ENCODE measurements at regions of chr11 and their contacts with region 1.

Region 1: GRCh38 chr11:47766305-47767227 is 575 bp downstream of the FNBP4 start:
- DNase-seq: peak; percentile 75
- H3K4me3 Mint-ChIP-seq: peak overlapping the region; percentile 99
- H3K27ac Mint-ChIP-seq: peak overlapping the region; percentile 100
- H3K4me1 Mint-ChIP-seq: peaks cover 28% of the 10 kb centered on the region
- H3K27me3 Mint-ChIP-seq: no peaks in the 10 kb centered on the region

Region 2: DNA sequence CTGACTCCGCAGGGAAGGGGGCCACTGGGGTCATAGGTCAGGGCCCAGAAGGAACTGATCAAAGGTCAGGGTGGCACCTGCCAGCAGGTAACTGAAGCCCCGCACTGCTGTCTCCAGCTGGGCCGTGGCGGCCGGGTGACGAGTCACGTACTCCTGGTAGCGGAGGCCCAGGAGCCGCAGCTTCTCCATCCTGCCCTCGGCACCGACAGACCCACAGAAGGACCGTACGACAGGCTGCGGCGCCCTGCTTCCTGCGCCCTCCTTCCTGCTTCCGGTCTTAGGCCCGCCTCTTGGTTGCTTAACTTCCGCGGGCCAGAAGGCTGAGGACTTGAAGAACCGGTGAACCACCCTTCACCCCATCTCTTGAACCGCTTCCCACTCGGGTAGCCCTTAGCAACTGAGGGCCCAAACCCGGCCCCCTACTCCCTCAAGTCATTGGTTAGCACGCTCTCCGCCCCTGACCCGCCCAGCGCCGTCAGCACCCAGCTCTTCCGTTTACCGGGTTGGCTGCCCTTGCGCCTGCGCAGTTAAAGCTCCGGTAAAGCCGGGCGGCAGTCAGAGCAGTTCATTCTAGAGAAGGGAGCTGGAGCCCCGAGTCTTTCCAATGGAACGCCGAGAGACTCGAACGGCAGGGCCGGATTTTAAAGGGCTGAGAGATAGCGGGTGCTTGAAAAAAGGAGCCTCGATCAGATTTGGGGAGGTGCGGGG is 1848.8 kb before region 1 on chr11 and contains the start of gene PEX16:
- intact Hi-C with region 1: loop called (anchors 2 kb)
- DNase-seq: peak; percentile 97
- H3K4me3 Mint-ChIP-seq: peak within 1 kb of the TSS; percentile 98
- H3K27ac Mint-ChIP-seq: peak within 1 kb of the TSS; percentile 92
- H3K4me1 Mint-ChIP-seq: peaks cover 22% of the 10 kb centered on the region
- H3K27me3 Mint-ChIP-seq: peaks cover 10% of the 10 kb centered on the region
- total RNA-seq, gene PEX16: 37.4 and 44.6 TPM in 2 replicates

Region 3: DNA sequence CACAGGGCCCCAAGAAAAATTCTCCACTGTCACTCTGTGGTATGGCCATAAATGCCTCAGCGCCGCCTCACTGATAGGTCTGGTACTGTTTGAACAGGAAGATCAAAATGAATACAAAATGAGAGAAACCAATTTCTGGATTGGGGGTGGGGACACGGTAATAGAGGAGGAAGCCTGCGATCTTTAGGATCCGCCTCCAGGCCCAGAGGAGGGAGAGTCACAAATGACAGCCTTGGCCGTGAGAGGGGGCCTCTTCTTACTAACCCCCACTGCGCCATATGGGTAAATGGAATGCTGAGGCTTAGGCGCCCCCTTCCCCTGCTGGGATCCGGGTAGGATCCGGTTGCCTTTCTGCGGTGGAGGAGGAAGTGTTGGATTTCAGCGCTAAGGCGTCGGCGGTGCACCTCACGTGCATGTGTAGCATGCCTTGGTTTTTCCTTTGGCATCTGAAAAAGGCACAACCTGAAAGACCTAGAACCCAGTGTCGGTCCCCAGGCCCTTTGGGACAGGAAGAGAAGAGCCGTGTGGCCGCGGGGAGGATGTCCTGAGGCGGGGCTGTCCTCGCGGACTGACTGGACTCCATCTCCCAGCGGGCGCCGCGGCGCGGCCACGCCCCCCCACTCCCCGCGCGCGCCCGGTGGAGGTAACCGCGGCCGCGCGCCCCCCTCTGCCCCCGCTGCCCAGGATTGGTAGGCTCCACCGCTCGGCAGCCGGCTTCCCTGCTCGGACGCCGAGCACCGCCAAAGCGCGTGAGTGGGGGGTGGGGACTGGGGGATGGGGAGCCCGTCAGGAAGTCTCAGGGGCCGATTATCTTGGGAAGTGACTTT is 497.4 kb before region 1 on chr11:
- intact Hi-C with region 1: loop called (anchors 1 kb)
- DNase-seq: peak; percentile 73
- H3K4me3 Mint-ChIP-seq: peak overlapping the region; percentile 81
- H3K27ac Mint-ChIP-seq: peak overlapping the region; percentile 92
- H3K4me1 Mint-ChIP-seq: peaks cover 54% of the 10 kb centered on the region
- H3K27me3 Mint-ChIP-seq: no peaks in the 10 kb centered on the region

Region 4: DNA sequence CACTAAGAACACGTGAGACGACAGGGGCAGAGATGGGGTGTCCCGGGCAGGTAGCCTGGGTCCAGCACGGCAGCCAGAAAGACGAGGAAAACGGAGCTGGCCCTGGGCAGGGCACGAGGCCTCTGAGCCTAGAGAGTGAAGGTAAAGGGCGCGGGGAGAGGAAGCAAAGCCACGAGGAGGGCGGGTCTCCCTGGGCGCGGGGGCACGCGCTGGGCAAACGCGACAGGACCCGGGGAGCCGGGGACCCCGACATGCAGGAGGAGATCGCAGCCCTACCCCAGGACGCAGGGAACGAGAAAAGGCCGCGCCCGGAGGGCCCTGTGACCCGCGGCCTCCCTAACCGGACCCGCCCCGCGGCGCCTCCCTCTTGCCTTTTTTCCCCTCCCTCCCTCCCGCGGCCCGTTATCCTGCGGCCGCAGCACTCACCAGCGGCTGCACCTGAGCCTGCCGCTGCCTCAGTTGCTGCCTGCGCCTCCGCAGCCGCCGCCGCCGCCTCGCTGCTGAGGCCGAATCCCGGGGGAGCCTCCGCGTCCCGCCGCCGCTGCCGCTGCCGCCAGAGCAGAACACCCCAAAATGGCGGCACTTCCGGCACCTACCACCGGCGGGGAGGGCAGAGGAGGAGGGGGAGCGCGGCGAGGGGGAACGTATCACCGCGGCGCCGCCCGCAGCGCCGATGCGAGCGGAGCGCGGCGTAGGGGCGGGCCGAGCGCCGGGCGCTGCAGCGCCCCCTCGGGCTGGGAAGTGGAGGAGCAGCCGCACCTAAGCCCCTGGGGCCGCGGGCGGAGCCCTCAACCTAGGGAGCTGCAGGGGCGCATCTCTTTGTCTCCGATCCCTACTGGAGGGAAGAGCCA is 213.8 kb before region 1 on chr11 and contains the start of gene CELF1:
- intact Hi-C with region 1: loop called (anchors 5 kb)
- DNase-seq: peak; percentile 92
- H3K4me3 Mint-ChIP-seq: peak within 1 kb of the TSS; percentile 99
- H3K27ac Mint-ChIP-seq: peak within 1 kb of the TSS; percentile 97
- H3K4me1 Mint-ChIP-seq: peaks cover 40% of the 10 kb centered on the region
- H3K27me3 Mint-ChIP-seq: no peaks in the 10 kb centered on the region
- total RNA-seq, gene CELF1: 148 and 155 TPM in 2 replicates

Region 5: DNA sequence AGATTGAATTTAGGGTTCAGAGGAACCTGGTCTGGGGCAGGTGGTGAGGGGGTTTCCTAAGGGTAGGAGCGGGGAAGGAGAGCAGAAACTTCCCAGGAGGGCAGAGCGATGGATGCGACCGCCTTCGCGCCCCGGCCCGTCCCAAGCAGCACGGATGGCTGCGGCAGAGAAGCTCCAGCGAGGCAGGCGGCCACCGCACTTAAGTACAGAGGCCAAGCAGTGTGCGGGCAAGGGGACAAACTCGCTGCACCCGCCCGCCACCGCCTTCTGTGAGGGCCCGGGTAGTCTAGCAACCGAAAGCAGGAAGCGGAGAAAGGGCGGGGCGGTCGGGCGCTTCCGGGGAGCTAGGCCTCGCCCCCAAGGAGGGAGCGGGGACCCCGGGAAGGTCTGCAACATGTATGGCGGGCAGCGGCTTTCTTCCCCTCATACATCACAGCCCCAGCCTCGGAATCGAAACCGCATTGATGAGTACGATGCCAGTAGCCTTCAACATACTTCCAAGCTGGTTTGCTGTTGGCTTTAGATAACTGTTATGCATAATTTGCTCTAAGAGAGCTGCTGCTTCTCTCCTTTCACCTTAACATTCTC is 51.4 kb before region 1 on chr11 and contains the start of gene AGBL2:
- intact Hi-C with region 1: loop called (anchors 2 kb)
- DNase-seq: peak; percentile 84
- H3K4me3 Mint-ChIP-seq: peak within 1 kb of the TSS; percentile 93
- H3K27ac Mint-ChIP-seq: peak within 1 kb of the TSS; percentile 96
- H3K4me1 Mint-ChIP-seq: peaks cover 31% of the 10 kb centered on the region
- H3K27me3 Mint-ChIP-seq: no peaks in the 10 kb centered on the region
- total RNA-seq, gene AGBL2: 3.2 and 5.5 TPM in 2 replicates

Region 6: DNA sequence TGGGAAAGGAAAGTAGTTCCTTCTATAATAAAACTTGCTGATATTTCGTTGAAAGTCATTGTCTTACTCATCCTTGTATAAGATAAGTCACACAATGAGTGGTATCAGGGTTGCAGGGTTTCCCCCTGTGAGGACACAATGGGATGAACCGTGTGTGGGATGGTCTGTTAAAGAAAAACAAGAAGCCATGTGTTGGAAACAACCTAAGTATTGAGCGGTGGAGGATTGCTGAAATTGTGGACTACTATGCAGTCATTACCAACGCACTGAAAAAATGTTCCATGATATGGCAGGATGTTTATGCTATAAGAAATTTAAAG is 242.3 kb after region 1 on chr11:
- intact Hi-C with region 1: loop called (anchors 2 kb)
- DNase-seq: peak; percentile 64
- H3K4me3 Mint-ChIP-seq: peak overlapping the region; percentile 75
- H3K27ac Mint-ChIP-seq: peak overlapping the region; percentile 98
- H3K4me1 Mint-ChIP-seq: peaks cover 89% of the 10 kb centered on the region
- H3K27me3 Mint-ChIP-seq: no peaks in the 10 kb centered on the region

Measured in activated T-helper 1 cell treated with anti-CD3 and anti-CD28 coated beads, Interleukin-12 subunit alpha, Interleukin-12 subunit beta, Interleukin-2, Interleukin-4 antibody, amounts not matched to agents 30 ng/mL and 10 ng/mL and 1 ng/mL, durations not matched to agents 14 hours and 24 hours and 36 hours (primary cell).